Pancreas (tissue), 10 donors: ENCODE measurements at regions of chr6 and their contacts with region 1.

Region 1: GRCh38 chr6:15691250-15691869 is 28.5 kb upstream of the DTNBP1 start:
- DNase-seq: peak; percentile 73 to 92 (median 83)
- ATAC-seq: peak; percentile 96 to 100 (median 99)
- H3K4me3 ChIP-seq: no peak overlapping the region
- H3K27ac ChIP-seq: no peak overlapping the region
- H3K4me1 ChIP-seq: peaks cover 0 to 10% (median 9%) of the 10 kb centered on the region in 3 donors
- H3K27me3 ChIP-seq: no peaks in the 10 kb centered on the region
- CTCF ChIP-seq: peak; percentile 95 to 99 (median 98)

Region 2: GRCh38 chr6:16128759-16129622 is 437.6 kb after region 1 on chr6 and contains the start of gene MYLIP:
- intact Hi-C with region 1: loop called in 1 of 3 experiments (anchors 10 kb)
- DNase-seq: peak; percentile 98 to 99 (median 98)
- ATAC-seq: peak; percentile 89 to 96 (median 94)
- H3K4me3 ChIP-seq: peak within 1 kb of the TSS; percentile 51 to 98 (median 95)
- H3K27ac ChIP-seq: peak within 1 kb of the TSS; percentile 88 to 98 (median 94)
- H3K4me1 ChIP-seq: peaks cover 19 to 26% (median 22%) of the 10 kb centered on the region in 3 donors
- H3K27me3 ChIP-seq: no peaks in the 10 kb centered on the region
- CTCF ChIP-seq: peak; percentile 29 to 73 (median 60)
- total RNA-seq, gene MYLIP: 10.5 to 20.2 (median 12.0) TPM

Region 3: DNA sequence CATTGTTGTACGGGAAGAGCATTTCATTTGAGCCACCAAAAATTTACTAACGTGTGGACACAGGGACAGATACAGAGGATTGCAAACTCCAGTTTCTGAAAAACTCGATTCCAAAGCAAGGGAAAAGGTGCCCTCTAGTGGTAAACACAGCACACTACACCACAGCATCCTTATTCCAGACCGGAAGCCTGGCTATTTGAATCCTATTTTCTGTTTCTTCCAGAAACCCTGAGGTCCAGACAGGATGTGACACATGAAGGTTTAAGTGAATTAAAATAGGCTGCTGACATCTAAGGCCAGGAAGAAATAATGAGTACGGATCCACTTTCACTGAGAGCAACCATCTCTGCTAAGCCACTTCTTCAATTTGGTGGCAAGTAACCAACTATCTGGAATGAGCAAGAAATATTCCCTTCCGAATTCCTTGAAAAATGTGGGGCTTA is 515.3 kb after region 1 on chr6:
- intact Hi-C with region 1: loop called in 2 of 3 experiments (anchors 5 to 10 kb)
- DNase-seq: peak in 2 of 6 donors; percentile 41 to 73
- ATAC-seq: peak; percentile 76 to 98 (median 95)
- H3K4me3 ChIP-seq: no peak overlapping the region
- H3K27ac ChIP-seq: no peak overlapping the region
- H3K4me1 ChIP-seq: peaks cover 0 to 3% (median 0%) of the 10 kb centered on the region in 3 donors
- H3K27me3 ChIP-seq: no peaks in the 10 kb centered on the region
- CTCF ChIP-seq: peak; percentile 91 to 97 (median 93)